K562 (cell line): ENCODE measurements at regions of chr17 and their contacts with region 1.

Region 1: DNA sequence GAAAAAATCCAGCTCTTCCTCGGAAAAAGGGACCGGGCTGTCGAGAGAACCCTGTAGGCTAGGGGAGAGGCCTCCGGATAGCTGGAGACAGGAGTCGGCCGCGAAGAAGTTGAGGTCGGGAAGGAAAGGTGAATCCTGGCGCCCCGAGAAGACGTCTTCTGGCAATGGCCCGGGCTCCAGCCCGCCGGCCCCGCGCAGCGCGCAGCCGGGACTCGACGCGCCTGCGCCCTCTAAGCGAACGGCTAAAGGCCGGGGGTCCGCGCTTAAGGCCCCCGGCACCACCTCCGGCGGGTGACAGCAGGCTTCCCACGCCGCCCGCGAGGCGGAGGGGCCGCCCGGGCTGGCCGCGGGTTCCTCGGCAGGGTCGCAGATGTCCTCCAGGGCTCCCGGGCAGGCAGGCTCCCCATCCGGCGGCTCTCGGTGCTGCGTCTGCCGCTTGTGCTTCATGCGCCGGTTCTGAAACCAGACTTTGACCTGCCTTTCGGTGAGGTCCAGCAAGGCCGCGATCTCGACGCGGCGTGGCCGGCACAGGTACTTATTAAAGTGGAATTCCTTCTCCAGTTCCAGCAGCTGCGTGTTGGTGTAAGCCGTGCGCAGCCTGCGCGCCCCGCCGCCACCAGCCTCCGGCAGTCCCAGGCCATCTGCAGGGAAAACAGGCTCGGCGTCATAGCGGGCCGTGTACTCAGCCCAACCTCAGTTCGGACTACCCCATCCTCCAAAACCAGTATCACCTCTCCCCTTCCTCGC is 1.6 kb downstream of the HOXB2 start:
- DNase-seq: peak in 3 of 4 experiments; percentile 63 to 79 (median 64)
- ATAC-seq: peak; percentile 27
- H3K4me3 ChIP-seq: peak overlapping the region; percentile 90
- H3K27ac ChIP-seq: peak overlapping the region; percentile 95
- H3K4me1 ChIP-seq: peaks cover 21 to 36% of the 10 kb centered on the region in 2 experiments
- H3K27me3 ChIP-seq: no peaks in the 10 kb centered on the region
- CTCF ChIP-seq: peak in 1 of 3 experiments; percentile 20; a peak in 2 of 6 replicates
- EP300 ChIP-seq: no peak
- POLR2A ChIP-seq: 0 out of 2 replicates have a peak, but pooled peaks have one; percentile 36
- RAD21 ChIP-seq: no peak

Region 2: GRCh38 chr17:48492401-48493298 is 50.6 kb before region 1 on chr17:
- CTCF ChIA-PET with region 1: no interaction called
- POLR2A ChIA-PET with region 1: interaction called, 3 read pairs
- in situ Hi-C with region 1: no loop called
- intact Hi-C with region 1: loop called (anchors 5 kb)
- DNase-seq: peak; percentile 86 to 89 (median 86)
- ATAC-seq: peak; percentile 92
- H3K4me3 ChIP-seq: peak overlapping the region; percentile 21
- H3K27ac ChIP-seq: peak overlapping the region; percentile 76
- H3K4me1 ChIP-seq: peaks cover 45 to 53% of the 10 kb centered on the region in 2 experiments
- H3K27me3 ChIP-seq: no peaks in the 10 kb centered on the region
- CTCF ChIP-seq: peak; percentile 84 to 93 (median 91)
- EP300 ChIP-seq: peak; percentile 78
- POLR2A ChIP-seq: peak; percentile 44; the same call in 1 of the 2 replicates
- RAD21 ChIP-seq: peak; percentile 85 to 91

Region 3: DNA sequence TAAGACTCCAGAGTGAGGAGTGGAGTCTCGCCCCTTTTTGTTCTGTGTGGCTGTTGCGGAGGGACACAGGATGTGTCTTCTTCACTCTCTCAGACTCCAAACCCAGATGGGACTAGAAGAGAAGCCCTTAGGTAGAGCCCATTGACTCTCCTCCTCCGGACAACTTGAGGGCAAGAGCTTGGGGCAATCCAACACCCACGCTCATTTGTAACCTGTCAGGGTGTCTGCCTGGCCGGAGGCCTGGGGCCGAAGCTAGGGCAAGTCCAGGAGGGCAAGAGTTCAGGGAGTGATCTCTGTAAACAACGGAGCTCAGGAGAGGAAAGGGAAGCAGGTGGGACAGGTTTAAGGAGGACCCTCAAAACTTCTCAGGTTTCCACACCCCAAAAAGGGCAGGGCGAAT is 11.0 kb before region 1 on chr17:
- CTCF ChIA-PET with region 1: no interaction called
- POLR2A ChIA-PET with region 1: interaction called, 13 read pairs
- in situ Hi-C with region 1: no loop called
- intact Hi-C with region 1: no loop called
- DNase-seq: no peak
- ATAC-seq: peak; percentile 15; the same call in 1 of the 3 replicates
- H3K4me3 ChIP-seq: no peak overlapping the region
- H3K27ac ChIP-seq: no peak overlapping the region; the same call in 2 of the 3 replicates
- H3K4me1 ChIP-seq: peaks cover 31 to 40% of the 10 kb centered on the region in 2 experiments; a peak in 4 of 5 replicates
- H3K27me3 ChIP-seq: no peaks in the 10 kb centered on the region
- CTCF ChIP-seq: no peak
- EP300 ChIP-seq: no peak
- POLR2A ChIP-seq: no peak
- RAD21 ChIP-seq: no peak

Region 4: GRCh38 chr17:48564188-48565021 is 21.1 kb after region 1 on chr17:
- CTCF ChIA-PET with region 1: no interaction called
- POLR2A ChIA-PET with region 1: interaction called, 12 read pairs
- in situ Hi-C with region 1: no loop called
- intact Hi-C with region 1: no loop called
- DNase-seq: peak in 1 of 4 experiments; percentile 33
- ATAC-seq: no peak
- H3K4me3 ChIP-seq: no peak overlapping the region
- H3K27ac ChIP-seq: no peak overlapping the region
- H3K4me1 ChIP-seq: peaks cover 8 to 16% of the 10 kb centered on the region in 2 experiments
- H3K27me3 ChIP-seq: no peaks in the 10 kb centered on the region
- CTCF ChIP-seq: no peak
- EP300 ChIP-seq: no peak
- POLR2A ChIP-seq: no peak
- RAD21 ChIP-seq: no peak

Region 5: DNA sequence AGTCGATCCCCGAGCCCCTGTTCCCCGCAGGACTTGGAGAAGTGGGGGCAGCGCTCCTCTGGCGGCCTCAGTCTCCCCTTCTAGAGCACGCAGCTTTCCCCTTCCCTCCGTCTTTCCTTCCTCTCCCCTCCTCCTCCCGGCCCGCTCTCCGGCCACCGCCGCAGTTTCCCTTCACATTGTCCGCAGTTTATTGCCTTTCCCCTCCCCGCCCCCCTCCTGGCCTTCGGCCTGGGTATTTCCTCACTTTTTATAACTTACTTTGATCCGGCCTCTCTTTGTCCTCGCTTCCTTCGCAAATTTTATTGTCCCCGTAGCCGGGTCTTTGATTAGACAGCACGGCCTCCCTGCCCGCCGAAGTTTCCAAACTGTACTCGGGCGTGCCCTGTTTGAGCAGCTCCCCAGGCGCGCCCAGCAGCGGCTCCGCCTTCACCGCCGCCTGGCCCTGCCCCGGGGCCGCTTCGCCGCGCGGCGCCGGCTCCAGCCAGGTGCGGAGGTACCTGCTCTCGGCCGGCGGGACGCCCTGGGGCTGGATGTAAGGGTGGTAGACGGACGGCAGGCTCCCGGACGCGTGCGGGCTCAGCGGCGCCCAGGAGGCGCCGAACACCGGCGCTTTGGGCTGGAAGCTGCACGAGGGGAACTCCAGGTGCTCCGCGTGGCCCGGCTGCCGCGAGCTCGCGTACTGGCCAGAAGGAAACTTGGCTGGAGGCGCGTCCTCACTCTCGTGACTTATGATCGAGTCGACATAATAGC is 82.4 kb after region 1 on chr17:
- CTCF ChIA-PET with region 1: no interaction called
- POLR2A ChIA-PET with region 1: interaction called, 4 read pairs
- in situ Hi-C with region 1: no loop called
- intact Hi-C with region 1: loop called (anchors 2 kb)
- DNase-seq: peak; percentile 56 to 76 (median 67)
- ATAC-seq: peak; percentile 5
- H3K4me3 ChIP-seq: peak overlapping the region; percentile 97
- H3K27ac ChIP-seq: peak overlapping the region; percentile 99
- H3K4me1 ChIP-seq: peaks cover 41 to 57% of the 10 kb centered on the region in 2 experiments
- H3K27me3 ChIP-seq: no peaks in the 10 kb centered on the region
- CTCF ChIP-seq: no peak
- EP300 ChIP-seq: no peak
- POLR2A ChIP-seq: peak; percentile 67
- RAD21 ChIP-seq: no peak

Region 6: DNA sequence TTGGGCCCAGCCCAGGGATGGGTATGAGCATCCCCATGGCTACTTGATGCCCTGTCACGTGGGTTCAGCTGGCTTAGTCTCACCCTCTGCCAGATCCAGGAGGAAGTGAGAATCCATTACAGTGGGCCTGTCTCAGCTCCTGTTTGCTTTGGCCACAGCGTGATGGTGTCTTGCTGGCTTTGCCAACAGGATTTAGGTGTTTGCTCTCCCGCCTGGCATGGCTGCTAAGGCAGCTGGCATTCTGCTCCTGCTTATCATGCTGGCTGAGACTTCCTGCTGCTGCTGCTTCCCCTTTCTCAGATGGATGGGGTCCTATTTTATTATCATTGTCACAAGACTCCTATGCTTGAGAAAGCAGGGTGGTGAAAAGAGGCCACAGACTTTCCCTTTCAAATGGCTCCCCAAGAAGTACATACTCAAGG is 213.6 kb after region 1 on chr17:
- CTCF ChIA-PET with region 1: no interaction called
- POLR2A ChIA-PET with region 1: no interaction called
- in situ Hi-C with region 1: no loop called
- intact Hi-C with region 1: no loop called
- DNase-seq: no peak
- ATAC-seq: no peak
- H3K4me3 ChIP-seq: no peak overlapping the region
- H3K27ac ChIP-seq: no peak overlapping the region
- H3K4me1 ChIP-seq: peaks cover 0 to 11% of the 10 kb centered on the region in 2 experiments; a peak in 2 of 5 replicates
- H3K27me3 ChIP-seq: peaks cover 53 to 68% of the 10 kb centered on the region in 2 experiments
- CTCF ChIP-seq: no peak
- EP300 ChIP-seq: no peak
- POLR2A ChIP-seq: no peak
- RAD21 ChIP-seq: no peak